ENCODE measurements at regions of chr15 and their contacts with region 1.

Region 1: DNA sequence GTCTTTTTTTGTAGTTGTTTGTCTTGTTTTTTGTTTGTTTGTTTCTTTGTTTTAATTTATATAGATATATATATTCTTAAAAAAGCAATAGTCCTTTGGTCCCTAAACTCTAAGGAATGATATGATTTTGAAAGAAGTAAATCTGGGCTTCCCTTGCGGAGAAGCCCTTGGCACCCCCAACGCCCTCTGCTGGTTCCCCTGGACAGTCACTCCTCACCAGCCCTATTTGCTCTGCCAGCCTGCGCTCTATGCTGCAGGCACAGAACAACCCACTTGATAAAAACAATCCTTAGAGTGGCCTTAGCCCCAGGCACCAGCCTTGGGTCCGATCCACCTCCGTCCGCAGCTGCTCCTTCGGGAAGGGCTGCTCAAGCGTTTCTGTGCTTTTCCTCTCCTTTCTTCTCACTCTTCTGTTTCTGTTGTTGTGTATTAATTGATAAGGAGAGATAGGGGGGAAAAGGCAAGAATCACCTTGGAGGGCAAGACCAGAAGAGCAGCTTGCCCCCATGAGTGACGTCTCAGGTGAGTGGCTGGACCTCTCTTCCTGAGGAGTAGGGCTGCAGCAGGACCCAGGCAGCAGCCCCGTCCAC is 13.7 kb upstream of the PARP6 start:
- DNase-seq: peak; percentile 72 to 83
- ATAC-seq: peak; percentile 75 to 91; a peak in 5 of 6 replicates
- H3K4me3 ChIP-seq: no peak overlapping the region
- H3K27ac ChIP-seq: no peak overlapping the region
- H3K4me1 ChIP-seq: no peaks in the 10 kb centered on the region
- CTCF ChIP-seq: peak; percentile 77
- EP300 ChIP-seq: no peak
- POLR2A ChIP-seq: no peak
- RAD21 ChIP-seq: peak; percentile 58 to 66

Region 2: DNA sequence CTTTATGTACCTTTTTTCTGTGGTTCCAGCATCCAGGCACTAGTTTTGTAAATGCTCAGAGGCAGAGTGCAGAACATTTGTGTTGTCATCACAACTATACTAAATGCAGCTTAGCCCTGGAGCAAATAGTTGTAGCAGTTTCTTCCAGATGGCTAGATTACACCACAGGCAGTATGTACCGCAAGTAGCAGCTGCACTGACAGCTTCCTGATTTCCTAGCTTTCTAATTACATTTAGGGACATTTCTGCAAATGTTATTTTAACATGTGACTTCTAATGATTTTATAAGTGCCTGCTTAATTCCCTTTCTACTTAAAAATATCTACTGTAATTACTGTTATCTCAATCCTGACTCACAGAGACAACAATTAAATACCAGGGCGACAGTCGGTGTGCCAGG is 369.2 kb before region 1 on chr15:
- CTCF ChIA-PET with region 1: no interaction called
- POLR2A ChIA-PET with region 1: no interaction called
- DNase-seq: no peak
- ATAC-seq: no peak
- H3K4me3 ChIP-seq: no peak overlapping the region
- H3K27ac ChIP-seq: no peak overlapping the region
- H3K4me1 ChIP-seq: no peaks in the 10 kb centered on the region
- CTCF ChIP-seq: no peak
- EP300 ChIP-seq: no peak
- POLR2A ChIP-seq: no peak
- RAD21 ChIP-seq: no peak

Region 3: DNA sequence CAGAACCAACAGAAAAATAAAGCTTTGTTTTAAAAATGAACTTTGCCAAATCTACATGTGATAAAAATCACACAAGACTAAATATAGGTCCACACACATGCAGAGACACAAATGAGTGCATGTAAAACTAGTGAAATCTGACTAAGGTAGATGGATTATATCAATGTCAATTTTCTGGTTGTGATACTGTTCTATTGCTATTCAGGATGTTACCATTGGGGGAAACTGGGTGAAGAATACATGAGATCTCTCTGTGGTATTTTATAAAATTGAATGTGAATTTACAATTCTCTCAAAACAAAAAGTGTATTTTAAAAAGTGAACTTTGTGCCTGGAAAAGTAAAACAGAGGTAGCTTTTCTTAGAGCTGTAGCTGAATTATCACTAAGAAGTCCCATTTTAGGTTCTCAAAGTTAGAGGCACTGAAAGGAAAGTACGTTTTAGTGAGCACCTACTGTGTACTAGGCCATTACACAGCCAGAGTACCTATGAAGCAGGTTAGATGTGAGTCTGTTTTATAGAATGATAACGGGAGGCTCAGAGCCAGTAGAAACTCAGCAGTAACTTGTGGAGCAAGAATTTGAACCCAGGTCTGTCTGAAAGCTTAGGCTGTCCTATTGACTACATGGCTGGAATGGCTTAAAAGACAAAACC is 96.6 kb before region 1 on chr15:
- CTCF ChIA-PET with region 1: interaction called, 22 read pairs
- POLR2A ChIA-PET with region 1: no interaction called
- DNase-seq: no peak
- ATAC-seq: no peak
- H3K4me3 ChIP-seq: no peak overlapping the region
- H3K27ac ChIP-seq: no peak overlapping the region
- H3K4me1 ChIP-seq: peaks cover 14% of the 10 kb centered on the region
- CTCF ChIP-seq: no peak
- EP300 ChIP-seq: no peak
- POLR2A ChIP-seq: no peak
- RAD21 ChIP-seq: no peak

Region 4: GRCh38 chr15:72206677-72207000 is 79.4 kb before region 1 on chr15:
- CTCF ChIA-PET with region 1: interaction called, 69 read pairs
- POLR2A ChIA-PET with region 1: no interaction called
- DNase-seq: no peak
- ATAC-seq: peak in 1 of 2 experiments; percentile 34; a peak in 3 of 6 replicates
- H3K4me3 ChIP-seq: no peak overlapping the region
- H3K27ac ChIP-seq: no peak overlapping the region
- H3K4me1 ChIP-seq: peaks cover 64% of the 10 kb centered on the region
- CTCF ChIP-seq: no peak
- EP300 ChIP-seq: no peak
- POLR2A ChIP-seq: no peak
- RAD21 ChIP-seq: no peak

Region 5: DNA sequence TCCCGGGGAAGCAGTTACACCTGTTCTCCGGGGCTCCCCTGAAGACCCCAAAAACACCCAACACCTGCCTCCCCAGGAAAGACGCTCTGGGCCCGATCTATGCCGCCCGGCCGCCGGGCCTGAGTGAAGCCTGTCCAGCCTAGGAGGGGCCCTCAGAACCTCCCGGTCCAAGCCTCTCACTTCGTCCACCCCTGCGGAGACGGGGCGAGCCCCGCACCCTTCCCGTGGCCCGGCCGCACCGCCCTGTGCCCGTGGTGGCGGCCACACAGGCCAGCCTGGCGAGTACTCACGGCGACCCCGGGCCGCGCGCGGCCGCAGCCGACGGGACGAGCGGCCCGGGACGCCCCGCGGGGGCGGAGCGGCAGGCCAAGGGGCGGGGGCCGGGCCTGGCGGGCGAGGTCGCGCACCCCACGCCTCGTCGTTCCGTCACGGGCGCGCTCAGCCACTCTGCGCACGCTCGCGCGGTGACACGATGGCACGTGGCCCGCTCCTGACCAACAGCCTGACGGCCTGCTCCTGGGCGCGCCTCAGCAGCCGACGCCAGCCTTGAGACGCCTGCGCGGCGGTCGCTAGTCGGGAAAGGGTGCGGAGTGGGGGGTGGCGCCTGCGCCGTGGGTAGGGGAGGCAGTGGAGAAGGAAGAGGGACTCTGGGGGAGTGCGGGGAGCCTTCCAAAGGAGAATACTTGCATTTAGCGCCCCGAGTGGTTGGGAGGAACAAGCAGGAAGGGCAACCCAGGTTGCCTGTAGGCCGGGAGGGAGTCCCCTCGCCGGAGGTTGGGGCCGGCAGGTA is 13.6 kb before region 1 on chr15 and contains the start of gene PARP6:
- CTCF ChIA-PET with region 1: interaction called, 54 read pairs
- POLR2A ChIA-PET with region 1: no interaction called
- DNase-seq: peak; percentile 100
- ATAC-seq: peak; percentile 95 to 99
- H3K4me3 ChIP-seq: peak within 1 kb of the TSS; percentile 80
- H3K27ac ChIP-seq: peak within 1 kb of the TSS; percentile 91 to 95
- H3K4me1 ChIP-seq: peaks cover 18% of the 10 kb centered on the region
- CTCF ChIP-seq: peak; percentile 75
- EP300 ChIP-seq: no peak
- POLR2A ChIP-seq: peak; percentile 90
- RAD21 ChIP-seq: peak in 1 of 2 experiments; percentile 23; a peak in 1 of 5 replicates
- polyA plus RNA-seq, gene PARP6: 167 and 197 TPM in 2 replicates

Region 6: DNA sequence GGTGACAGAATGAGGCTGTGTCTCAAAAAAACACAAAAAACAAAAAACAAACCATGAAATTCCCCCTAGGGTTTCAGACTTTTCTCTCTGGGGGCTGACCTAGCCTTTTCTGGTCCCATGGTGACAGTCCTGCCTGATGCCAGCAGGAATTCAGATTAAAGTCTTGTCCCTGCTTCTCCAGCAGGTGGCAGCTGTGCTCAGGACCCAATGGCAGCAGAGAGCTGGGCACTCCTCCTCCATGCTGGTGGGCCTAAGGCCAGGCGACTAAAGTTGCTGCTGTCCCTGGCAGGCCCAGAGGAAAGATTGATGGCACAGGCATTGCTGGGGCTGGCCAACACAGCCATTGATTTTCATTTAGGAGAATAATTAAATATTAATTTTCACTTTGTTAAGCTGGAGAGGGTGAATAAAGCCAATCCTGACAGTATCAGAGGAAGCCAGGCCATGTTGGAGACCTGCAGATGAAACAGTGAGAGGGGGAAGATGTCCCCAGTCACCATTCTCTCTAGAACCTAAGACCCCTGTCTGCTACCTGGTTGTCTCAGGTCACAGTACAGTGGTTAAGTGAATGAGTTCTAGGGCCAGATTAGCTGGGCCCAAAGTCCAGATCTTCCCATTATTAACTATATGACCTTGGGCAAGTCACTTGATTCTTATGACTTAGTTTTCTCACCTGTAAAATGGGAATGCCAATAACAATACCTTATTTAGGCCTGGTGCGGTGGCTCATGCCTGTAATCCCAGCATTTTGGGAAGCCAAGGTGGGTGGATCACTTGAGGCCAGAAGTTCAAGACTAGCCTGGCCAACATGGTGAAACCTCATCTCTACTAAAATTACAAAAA is 26.8 kb after region 1 on chr15:
- CTCF ChIA-PET with region 1: interaction called, 20 read pairs
- POLR2A ChIA-PET with region 1: no interaction called
- DNase-seq: peak; percentile 82 to 97
- ATAC-seq: peak; percentile 89 to 96
- H3K4me3 ChIP-seq: no peak overlapping the region
- H3K27ac ChIP-seq: no peak overlapping the region
- H3K4me1 ChIP-seq: no peaks in the 10 kb centered on the region
- CTCF ChIP-seq: peak; percentile 85
- EP300 ChIP-seq: no peak
- POLR2A ChIP-seq: no peak
- RAD21 ChIP-seq: peak; percentile 85 to 91

Region 7: GRCh38 chr15:72732516-72732915 is 446.5 kb after region 1 on chr15:
- CTCF ChIA-PET with region 1: no interaction called
- POLR2A ChIA-PET with region 1: no interaction called
- DNase-seq: no peak
- ATAC-seq: peak; percentile 63 to 76; a peak in 5 of 6 replicates
- H3K4me3 ChIP-seq: no peak overlapping the region
- H3K27ac ChIP-seq: no peak overlapping the region
- H3K4me1 ChIP-seq: no peaks in the 10 kb centered on the region
- CTCF ChIP-seq: no peak
- EP300 ChIP-seq: no peak
- POLR2A ChIP-seq: no peak
- RAD21 ChIP-seq: no peak

Measured in A549 (cell line).